Caco-2 (cell line): ENCODE measurements at regions of chr11 and their contacts with region 1.

Region 1: DNA sequence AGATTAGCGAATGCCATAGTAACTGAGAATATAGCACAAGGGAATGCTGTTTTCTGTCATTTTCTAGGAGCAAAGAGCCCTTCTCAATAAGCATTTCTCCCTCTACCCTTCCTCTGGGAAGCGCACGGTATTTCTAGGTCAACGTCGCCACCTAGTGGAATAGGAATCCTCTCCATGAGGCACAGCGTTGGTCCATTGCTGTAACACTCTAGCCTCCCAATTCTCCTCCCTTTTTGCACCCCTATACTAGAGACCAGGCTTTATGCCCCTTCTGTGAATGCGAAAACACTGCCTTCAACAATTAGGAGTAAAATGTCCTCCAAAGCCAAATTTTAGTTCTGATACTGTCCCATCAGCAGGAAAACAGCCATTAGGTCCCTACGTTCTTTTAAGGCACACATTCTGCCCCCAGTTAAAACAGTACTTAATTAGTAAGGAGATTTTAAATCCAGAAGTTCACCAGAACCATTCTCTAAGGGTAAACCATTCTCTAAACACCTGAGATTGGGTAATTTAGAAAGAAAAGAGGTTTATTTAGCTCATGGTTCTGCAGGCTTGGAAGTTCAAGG is 12.8 kb upstream of the HYLS1 start:
- DNase-seq: peak; percentile 78 to 82
- H3K4me3 ChIP-seq: no peak overlapping the region
- H3K4me3 Mint-ChIP-seq: no peak overlapping the region
- H3K27ac Mint-ChIP-seq: no peak overlapping the region
- H3K4me1 ChIP-seq: no peaks in the 10 kb centered on the region
- H3K4me1 Mint-ChIP-seq: peaks cover 7% of the 10 kb centered on the region
- H3K27me3 ChIP-seq: no peaks in the 10 kb centered on the region
- H3K27me3 Mint-ChIP-seq: peaks cover 3% of the 10 kb centered on the region
- CTCF ChIP-seq: peak; percentile 93 to 97

Region 2: DNA sequence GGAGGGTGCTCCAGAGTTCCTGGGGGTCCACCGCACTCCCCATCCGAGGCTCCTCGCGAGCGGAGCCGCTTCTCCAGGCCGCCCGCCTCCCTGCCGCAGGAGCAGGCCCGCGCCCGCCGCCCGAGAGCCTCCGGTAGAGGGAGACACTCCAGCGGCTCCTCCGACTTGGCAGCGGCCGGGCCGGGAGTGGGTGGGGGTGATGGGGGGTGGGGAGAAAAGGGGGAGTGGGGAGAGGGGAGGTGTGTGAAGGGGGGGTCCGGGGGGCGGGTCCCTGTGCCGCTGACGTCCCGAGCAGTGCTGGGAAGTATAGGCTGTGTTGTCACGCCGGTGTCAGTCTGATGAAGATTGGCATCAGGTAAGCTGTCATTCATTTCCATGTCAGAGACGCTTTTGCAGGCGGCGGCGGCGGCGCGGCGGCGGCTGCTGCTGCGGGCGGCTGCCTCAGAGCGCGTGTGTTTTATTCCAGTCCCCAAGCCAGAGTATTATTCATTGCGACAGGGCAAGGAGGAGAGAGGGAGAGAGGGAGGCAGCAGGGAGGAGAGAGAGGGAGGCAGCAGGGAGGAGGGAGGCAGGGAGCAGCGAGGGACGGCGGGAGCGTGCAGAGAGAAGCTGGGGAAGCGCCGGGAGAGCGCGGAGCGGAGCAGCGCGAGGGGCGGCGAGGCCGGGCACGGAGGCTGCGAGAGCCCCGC is 710.1 kb before region 1 on chr11 and contains the start of gene PKNOX2:
- CTCF ChIA-PET with region 1: no interaction called
- POLR2A ChIA-PET with region 1: no interaction called
- intact Hi-C with region 1: loop called (anchors 10 kb)
- DNase-seq: peak; percentile 71 to 89
- H3K4me3 ChIP-seq: peak within 1 kb of the TSS; percentile 65
- H3K4me3 Mint-ChIP-seq: peak within 1 kb of the TSS; percentile 76
- H3K27ac Mint-ChIP-seq: no peak within 1 kb of the TSS
- H3K4me1 ChIP-seq: peaks cover 5% of the 10 kb centered on the region
- H3K4me1 Mint-ChIP-seq: peaks cover 8% of the 10 kb centered on the region
- H3K27me3 ChIP-seq: peaks cover 11% of the 10 kb centered on the region
- H3K27me3 Mint-ChIP-seq: peaks cover 27% of the 10 kb centered on the region
- CTCF ChIP-seq: peak; percentile 67 to 95
- total RNA-seq, gene PKNOX2: not detected in 2 replicates

Region 3: GRCh38 chr11:125404776-125405435 is 469.7 kb before region 1 on chr11:
- CTCF ChIA-PET with region 1: no interaction called
- POLR2A ChIA-PET with region 1: no interaction called
- intact Hi-C with region 1: loop called (anchors 5 kb)
- DNase-seq: peak; percentile 74 to 90
- H3K4me3 ChIP-seq: no peak overlapping the region
- H3K4me3 Mint-ChIP-seq: no peak overlapping the region
- H3K27ac Mint-ChIP-seq: no peak overlapping the region
- H3K4me1 ChIP-seq: no peaks in the 10 kb centered on the region
- H3K4me1 Mint-ChIP-seq: no peaks in the 10 kb centered on the region
- H3K27me3 ChIP-seq: peaks cover 5% of the 10 kb centered on the region
- H3K27me3 Mint-ChIP-seq: peaks cover 48% of the 10 kb centered on the region
- CTCF ChIP-seq: peak; percentile 99

Region 4: DNA sequence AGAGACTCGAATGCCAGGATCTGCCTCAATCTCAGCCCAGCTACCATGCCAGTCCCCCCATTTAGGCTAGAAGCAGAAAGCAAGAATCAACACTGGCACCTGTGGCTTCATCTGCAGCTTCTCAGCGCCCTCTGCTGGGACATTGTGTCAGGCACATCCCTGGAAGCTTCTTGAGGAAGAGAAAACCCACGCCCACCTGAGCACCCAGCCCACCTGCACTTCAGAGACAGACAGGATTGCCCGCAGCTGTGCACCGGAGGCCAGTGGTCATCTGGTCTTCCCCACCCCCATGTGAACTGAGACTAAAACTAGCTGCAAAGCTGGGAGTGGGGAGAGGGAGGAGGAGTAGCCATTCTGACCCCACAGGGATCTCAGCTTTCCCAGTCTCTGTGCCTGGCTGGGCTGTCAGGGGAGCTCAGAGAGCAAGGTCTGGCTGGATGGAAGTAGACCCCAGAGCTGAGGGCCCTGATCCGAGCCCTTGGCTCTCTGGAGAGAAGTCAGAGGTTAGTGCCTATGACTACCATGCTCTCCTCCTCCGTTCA is 445.4 kb before region 1 on chr11:
- CTCF ChIA-PET with region 1: no interaction called
- POLR2A ChIA-PET with region 1: no interaction called
- intact Hi-C with region 1: loop called (anchors 5 kb)
- DNase-seq: peak; percentile 76 to 78
- H3K4me3 ChIP-seq: no peak overlapping the region
- H3K4me3 Mint-ChIP-seq: no peak overlapping the region
- H3K27ac Mint-ChIP-seq: no peak overlapping the region
- H3K4me1 ChIP-seq: 0 out of 2 replicates have a peak, but pooled peaks cover 7% of the 10 kb centered on the region
- H3K4me1 Mint-ChIP-seq: no peaks in the 10 kb centered on the region
- H3K27me3 ChIP-seq: peaks cover 1% of the 10 kb centered on the region; the same call in 1 of the 2 replicates
- H3K27me3 Mint-ChIP-seq: peaks cover 24% of the 10 kb centered on the region
- CTCF ChIP-seq: peak; percentile 93 to 95

Region 5: DNA sequence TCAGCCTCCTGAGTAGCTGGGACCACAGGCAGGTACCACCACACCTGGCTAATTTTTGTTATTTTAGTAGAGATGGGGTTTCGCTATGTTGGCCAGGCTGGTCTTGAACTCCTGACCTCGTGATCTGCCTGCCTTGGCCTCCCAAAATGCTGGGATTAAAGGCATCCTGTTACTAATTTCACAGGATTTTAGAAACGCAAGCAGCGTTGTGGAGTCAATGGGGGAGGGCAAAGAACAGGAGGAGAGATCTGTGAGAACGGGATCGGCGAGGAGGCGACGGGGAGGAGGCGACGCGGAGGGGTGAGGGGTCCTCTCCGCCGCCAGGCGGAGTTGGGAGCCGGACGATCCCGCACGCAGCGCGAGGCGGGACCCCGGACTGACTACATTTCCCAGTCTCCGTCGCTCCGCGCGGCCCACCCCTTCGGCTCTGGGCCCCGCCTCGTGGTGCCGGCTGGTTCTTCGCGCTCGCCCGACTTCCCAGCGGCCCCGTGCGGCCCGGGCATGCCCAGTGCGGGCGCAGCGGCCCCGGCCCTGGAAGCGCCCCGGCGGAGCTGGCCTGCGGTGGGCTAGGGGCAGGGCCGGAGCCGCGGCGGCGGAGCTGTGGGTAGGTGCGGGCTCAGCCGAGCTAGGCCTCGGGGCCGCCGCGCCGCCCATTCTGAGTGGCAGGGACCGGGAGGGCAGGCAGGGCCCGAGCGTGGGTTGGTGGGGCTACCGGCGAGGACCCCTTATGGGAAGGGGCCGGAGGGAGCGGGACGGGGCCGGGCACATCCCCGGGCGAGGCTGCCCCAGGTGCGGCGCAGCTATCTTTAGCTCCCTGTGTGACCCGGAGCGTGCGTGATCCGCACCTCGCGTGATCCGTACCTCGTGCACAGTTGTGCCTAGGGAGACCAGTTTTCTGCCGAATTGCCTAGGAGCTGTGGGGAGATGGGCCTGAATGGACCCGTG is 305.4 kb before region 1 on chr11 and contains the start of gene EI24:
- CTCF ChIA-PET with region 1: no interaction called
- POLR2A ChIA-PET with region 1: no interaction called
- intact Hi-C with region 1: loop called (anchors 5 kb)
- DNase-seq: peak; percentile 97 to 99
- H3K4me3 ChIP-seq: peak within 1 kb of the TSS; percentile 99
- H3K4me3 Mint-ChIP-seq: peak within 1 kb of the TSS; percentile 80
- H3K27ac Mint-ChIP-seq: peak within 1 kb of the TSS; percentile 58
- H3K4me1 ChIP-seq: peaks cover 27% of the 10 kb centered on the region
- H3K4me1 Mint-ChIP-seq: peaks cover 15% of the 10 kb centered on the region
- H3K27me3 ChIP-seq: no peaks in the 10 kb centered on the region
- H3K27me3 Mint-ChIP-seq: no peaks in the 10 kb centered on the region
- CTCF ChIP-seq: peak; percentile 89 to 98
- total RNA-seq, gene EI24: 164 and 170 TPM in 2 replicates

Region 6: GRCh38 chr11:125625630-125626287 is 248.9 kb before region 1 on chr11:
- CTCF ChIA-PET with region 1: no interaction called
- POLR2A ChIA-PET with region 1: no interaction called
- intact Hi-C with region 1: loop called (anchors 1 kb)
- DNase-seq: peak; percentile 96 to 98
- H3K4me3 ChIP-seq: peak overlapping the region; percentile 68
- H3K4me3 Mint-ChIP-seq: peak overlapping the region; percentile 82
- H3K27ac Mint-ChIP-seq: peak overlapping the region; percentile 92
- H3K4me1 ChIP-seq: peaks cover 8% of the 10 kb centered on the region
- H3K4me1 Mint-ChIP-seq: peaks cover 17% of the 10 kb centered on the region
- H3K27me3 ChIP-seq: no peaks in the 10 kb centered on the region
- H3K27me3 Mint-ChIP-seq: no peaks in the 10 kb centered on the region
- CTCF ChIP-seq: no peak

Region 7: DNA sequence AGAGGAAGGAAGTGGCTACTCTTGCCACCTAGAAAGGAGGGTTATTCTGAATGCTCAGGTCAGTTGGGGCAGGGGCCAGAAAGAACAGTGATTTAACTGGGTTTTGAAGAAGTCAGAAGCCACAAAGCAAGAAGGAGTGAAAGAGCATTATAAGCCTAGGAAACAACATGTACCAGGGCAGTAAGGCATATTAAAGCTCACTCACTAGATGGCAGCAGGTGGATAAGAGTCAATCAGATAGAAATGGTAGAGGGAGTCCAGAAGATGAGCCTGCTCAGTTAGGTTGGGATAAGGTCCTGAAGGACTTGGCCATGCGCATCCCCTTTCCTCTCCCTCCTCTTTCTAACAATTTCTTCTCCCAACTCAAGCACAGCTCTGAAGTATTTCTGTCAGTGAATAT is 150.5 kb before region 1 on chr11:
- CTCF ChIA-PET with region 1: interaction called, 3 read pairs
- POLR2A ChIA-PET with region 1: no interaction called
- intact Hi-C with region 1: loop called (anchors 1 kb)
- DNase-seq: peak in 1 of 2 experiments; percentile 29
- H3K4me3 ChIP-seq: no peak overlapping the region
- H3K4me3 Mint-ChIP-seq: no peak overlapping the region
- H3K27ac Mint-ChIP-seq: no peak overlapping the region
- H3K4me1 ChIP-seq: no peaks in the 10 kb centered on the region
- H3K4me1 Mint-ChIP-seq: no peaks in the 10 kb centered on the region
- H3K27me3 ChIP-seq: no peaks in the 10 kb centered on the region; the same call in none of the 2 replicates
- H3K27me3 Mint-ChIP-seq: peaks cover 22% of the 10 kb centered on the region
- CTCF ChIP-seq: peak; percentile 41